CD8-positive, alpha-beta T cell (primary cell): ENCODE measurements at regions of chr11 and their contacts with region 1.

Region 1: GRCh38 chr11:2420502-2421225 is 20.1 kb downstream of the TSSC4 start:
- DNase-seq: peak; percentile 52 to 86 (median 69)
- ATAC-seq: peak; percentile 94
- H3K4me3 ChIP-seq: no peak overlapping the region
- H3K4me3 Mint-ChIP-seq: no peak overlapping the region
- H3K27ac ChIP-seq: no peak overlapping the region
- H3K27ac Mint-ChIP-seq: no peak overlapping the region
- H3K4me1 ChIP-seq: peaks cover 14% of the 10 kb centered on the region
- H3K4me1 Mint-ChIP-seq: peaks cover 4% of the 10 kb centered on the region
- H3K27me3 ChIP-seq: peaks cover 0 to 3% of the 10 kb centered on the region in 2 experiments
- H3K27me3 Mint-ChIP-seq: no peaks in the 10 kb centered on the region
- CTCF ChIP-seq: peak; percentile 83

Region 2: DNA sequence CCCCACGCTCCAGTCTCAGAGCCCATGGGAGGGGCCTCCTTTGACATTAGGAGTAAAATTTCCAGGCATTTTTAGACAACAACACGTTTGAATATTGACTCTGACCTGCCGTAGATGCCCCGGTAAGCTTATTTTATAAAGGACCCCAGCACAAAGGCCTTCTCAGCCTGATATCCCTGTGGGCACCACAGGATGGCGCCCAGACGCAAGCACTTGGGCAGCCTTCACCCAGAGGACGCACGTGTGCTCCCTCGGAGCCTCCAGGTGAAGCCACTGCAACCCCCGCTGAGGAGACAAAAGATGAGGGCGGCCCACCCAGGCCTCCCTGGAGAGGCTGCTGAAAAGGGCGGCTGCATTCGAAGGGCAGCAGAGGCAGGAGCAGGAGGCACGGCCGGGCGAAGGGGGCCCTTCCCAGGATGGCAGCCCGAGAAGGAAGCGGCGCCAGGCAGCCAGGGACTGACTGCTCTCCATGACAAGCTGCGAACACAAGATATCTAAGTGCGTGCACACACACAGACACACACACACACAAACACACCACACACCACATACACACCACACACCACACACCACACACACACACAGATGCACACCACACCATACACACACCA is 233.9 kb before region 1 on chr11:
- CTCF ChIA-PET with region 1: interaction called, 77 read pairs
- POLR2A ChIA-PET with region 1: no interaction called
- intact Hi-C with region 1: loop called (anchors 1 kb)
- DNase-seq: peak; percentile 32 to 78 (median 52)
- ATAC-seq: peak; percentile 97
- H3K4me3 ChIP-seq: no peak overlapping the region
- H3K4me3 Mint-ChIP-seq: no peak overlapping the region
- H3K27ac ChIP-seq: no peak overlapping the region
- H3K27ac Mint-ChIP-seq: no peak overlapping the region
- H3K4me1 ChIP-seq: peaks cover 5% of the 10 kb centered on the region
- H3K4me1 Mint-ChIP-seq: peaks cover 5% of the 10 kb centered on the region
- H3K27me3 ChIP-seq: peaks cover 0 to 10% of the 10 kb centered on the region in 2 experiments
- H3K27me3 Mint-ChIP-seq: peaks cover 14% of the 10 kb centered on the region
- CTCF ChIP-seq: peak; percentile 67

Region 3: GRCh38 chr11:2305140-2305840 is 115.4 kb before region 1 on chr11:
- CTCF ChIA-PET with region 1: interaction called, 338 read pairs
- POLR2A ChIA-PET with region 1: interaction called, 29 read pairs
- intact Hi-C with region 1: loop called (anchors 1 kb)
- DNase-seq: peak; percentile 67 to 93 (median 86)
- ATAC-seq: peak; percentile 52
- H3K4me3 ChIP-seq: peak overlapping the region; percentile 82 to 83
- H3K4me3 Mint-ChIP-seq: peak overlapping the region; percentile 91
- H3K27ac ChIP-seq: peak overlapping the region; percentile 48 to 61
- H3K27ac Mint-ChIP-seq: peak overlapping the region; percentile 86
- H3K4me1 ChIP-seq: peaks cover 56% of the 10 kb centered on the region
- H3K4me1 Mint-ChIP-seq: peaks cover 51% of the 10 kb centered on the region
- H3K27me3 ChIP-seq: no peaks in the 10 kb centered on the region
- H3K27me3 Mint-ChIP-seq: no peaks in the 10 kb centered on the region
- CTCF ChIP-seq: peak; percentile 78

Region 4: DNA sequence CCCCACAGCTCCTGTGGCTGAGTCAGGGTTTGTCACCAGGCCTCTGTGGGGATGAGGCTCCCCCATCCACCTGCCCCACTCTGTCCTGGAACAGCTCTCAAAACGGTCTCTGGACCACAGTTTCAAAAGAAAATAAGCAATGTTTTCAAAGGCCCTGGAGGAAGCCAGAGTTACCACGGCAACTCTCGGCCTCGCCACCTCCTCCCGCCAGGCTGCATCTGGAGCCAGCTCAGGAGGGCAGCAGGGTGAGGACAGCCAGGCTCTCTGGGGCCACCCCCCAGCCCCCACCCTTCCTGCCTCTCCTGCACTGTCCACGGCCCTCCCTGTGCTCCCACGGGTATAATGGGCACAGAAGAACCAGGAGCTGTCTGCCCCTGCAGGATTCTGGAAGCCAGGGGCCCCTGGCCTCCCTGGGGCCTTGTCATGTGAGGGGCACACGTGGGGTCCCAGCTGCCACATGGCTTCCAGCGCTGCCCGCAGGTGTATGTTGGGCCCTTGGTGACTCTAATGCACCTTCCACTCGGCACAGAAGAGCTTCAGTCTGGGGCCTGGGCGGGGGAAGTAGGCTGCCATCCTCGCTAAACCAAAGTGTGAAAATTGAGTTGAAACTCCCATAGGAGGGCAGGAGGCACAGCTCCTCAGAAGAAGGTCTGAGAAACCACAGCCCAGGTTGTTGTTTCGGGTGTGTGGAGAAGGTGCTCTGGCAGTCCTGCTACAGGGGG is 33.2 kb before region 1 on chr11:
- CTCF ChIA-PET with region 1: interaction called, 17 read pairs
- POLR2A ChIA-PET with region 1: no interaction called
- intact Hi-C with region 1: no loop called
- DNase-seq: peak in 6 of 9 experiments; percentile 32 to 85 (median 59)
- ATAC-seq: peak; percentile 56
- H3K4me3 ChIP-seq: peak overlapping the region in 1 of 2 experiments; percentile 31
- H3K4me3 Mint-ChIP-seq: peak overlapping the region; percentile 18
- H3K27ac ChIP-seq: peak overlapping the region in 1 of 2 experiments; percentile 72
- H3K27ac Mint-ChIP-seq: peak overlapping the region; percentile 55
- H3K4me1 ChIP-seq: peaks cover 61% of the 10 kb centered on the region
- H3K4me1 Mint-ChIP-seq: peaks cover 60% of the 10 kb centered on the region
- H3K27me3 ChIP-seq: no peaks in the 10 kb centered on the region
- H3K27me3 Mint-ChIP-seq: no peaks in the 10 kb centered on the region
- CTCF ChIP-seq: no peak